Activated CD4-positive, alpha-beta T cell treated with anti-CD3 and anti-CD28 coated beads for 36 hours (primary cell): ENCODE measurements at regions of chr9 and their contacts with region 1.

Region 1: GRCh38 chr9:928362-929042 is 48.0 kb upstream of the DMRT3 start:
- DNase-seq: peak; percentile 17
- ATAC-seq: no peak
- H3K4me3 Mint-ChIP-seq: no peak overlapping the region
- H3K27ac Mint-ChIP-seq: no peak overlapping the region
- H3K4me1 Mint-ChIP-seq: no peaks in the 10 kb centered on the region
- H3K27me3 Mint-ChIP-seq: peaks cover 18% of the 10 kb centered on the region

Region 2: DNA sequence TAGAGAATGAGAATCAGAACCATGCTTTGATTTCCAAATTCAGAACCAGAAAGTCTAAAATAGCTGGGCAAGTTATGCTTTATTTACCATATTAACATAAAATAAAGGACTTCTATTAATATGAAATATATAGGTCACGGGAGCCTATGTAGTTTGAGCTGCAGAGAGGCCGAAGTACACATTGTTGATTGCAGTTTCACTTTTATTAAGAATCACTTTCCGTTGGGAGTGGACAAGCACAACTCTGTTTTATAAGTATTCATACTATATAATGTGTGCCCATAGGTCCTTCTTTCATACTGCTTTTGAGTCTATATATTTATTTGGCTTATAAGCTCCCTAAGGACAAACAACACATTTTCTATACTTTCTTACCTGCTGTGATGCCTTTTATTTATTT is 10.8 kb before region 1 on chr9:
- CTCF ChIA-PET with region 1: interaction called, 17 read pairs
- POLR2A ChIA-PET with region 1: no interaction called
- intact Hi-C with region 1: no loop called
- DNase-seq: no peak
- ATAC-seq: no peak
- H3K4me3 Mint-ChIP-seq: no peak overlapping the region
- H3K27ac Mint-ChIP-seq: no peak overlapping the region
- H3K4me1 Mint-ChIP-seq: no peaks in the 10 kb centered on the region
- H3K27me3 Mint-ChIP-seq: peaks cover 8% of the 10 kb centered on the region